ENCODE measurements at regions of chr3 and their contacts with region 1.

Region 1: DNA sequence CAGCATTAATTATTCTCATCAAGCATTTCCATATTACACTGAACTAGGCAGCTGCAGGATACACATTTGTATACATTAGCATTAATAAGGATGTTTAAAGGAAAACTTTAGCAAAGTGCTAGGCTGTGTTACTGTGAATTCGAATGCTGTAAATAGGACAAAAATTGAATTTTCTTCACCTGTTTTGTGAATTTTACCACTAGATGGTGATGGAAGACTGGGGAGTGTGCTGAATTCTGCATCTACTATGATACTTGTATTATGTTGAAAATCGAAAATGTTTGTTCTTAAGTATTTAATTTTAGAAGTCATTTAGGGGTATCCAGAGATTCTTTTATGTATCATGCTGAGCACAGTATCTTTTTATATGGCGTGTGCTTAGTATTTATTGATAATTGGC is 12.3 kb upstream of the P2RY14 start:
- DNase-seq: peak; percentile 54
- H3K4me3 Mint-ChIP-seq: no peak overlapping the region
- H3K27ac Mint-ChIP-seq: no peak overlapping the region
- H3K4me1 Mint-ChIP-seq: no peaks in the 10 kb centered on the region
- H3K27me3 Mint-ChIP-seq: peaks cover 14% of the 10 kb centered on the region

Region 2: GRCh38 chr3:151316267-151316991 is 25.8 kb after region 1 on chr3 and contains the start of gene GPR87:
- intact Hi-C with region 1: no loop called
- DNase-seq: peak; percentile 61
- H3K4me3 Mint-ChIP-seq: peak within 1 kb of the TSS; percentile 30
- H3K27ac Mint-ChIP-seq: peak within 1 kb of the TSS; percentile 60
- H3K4me1 Mint-ChIP-seq: peaks cover 18% of the 10 kb centered on the region
- H3K27me3 Mint-ChIP-seq: peaks cover 6% of the 10 kb centered on the region
- total RNA-seq, gene GPR87: 1.0 and 1.4 TPM in 2 replicates

Region 3: GRCh38 chr3:151327571-151328198 is 37.0 kb after region 1 on chr3:
- intact Hi-C with region 1: loop called (anchors 1 kb)
- DNase-seq: no peak
- H3K4me3 Mint-ChIP-seq: no peak overlapping the region
- H3K27ac Mint-ChIP-seq: no peak overlapping the region
- H3K4me1 Mint-ChIP-seq: peaks cover 9% of the 10 kb centered on the region
- H3K27me3 Mint-ChIP-seq: peaks cover 30% of the 10 kb centered on the region

Region 4: GRCh38 chr3:151412989-151413388 is 122.3 kb after region 1 on chr3:
- intact Hi-C with region 1: loop called (anchors 10 kb)
- DNase-seq: no peak
- H3K4me3 Mint-ChIP-seq: no peak overlapping the region
- H3K27ac Mint-ChIP-seq: no peak overlapping the region
- H3K4me1 Mint-ChIP-seq: no peaks in the 10 kb centered on the region
- H3K27me3 Mint-ChIP-seq: peaks cover 4% of the 10 kb centered on the region

Region 5: GRCh38 chr3:151686257-151686656 is 395.6 kb after region 1 on chr3:
- intact Hi-C with region 1: no loop called
- DNase-seq: no peak
- H3K4me3 Mint-ChIP-seq: no peak overlapping the region
- H3K27ac Mint-ChIP-seq: no peak overlapping the region
- H3K4me1 Mint-ChIP-seq: no peaks in the 10 kb centered on the region
- H3K27me3 Mint-ChIP-seq: peaks cover 3% of the 10 kb centered on the region

Region 6: GRCh38 chr3:151838583-151839312 is 548.1 kb after region 1 on chr3:
- intact Hi-C with region 1: loop called (anchors 1 kb)
- DNase-seq: peak; percentile 81
- H3K4me3 Mint-ChIP-seq: no peak overlapping the region
- H3K27ac Mint-ChIP-seq: no peak overlapping the region
- H3K4me1 Mint-ChIP-seq: no peaks in the 10 kb centered on the region
- H3K27me3 Mint-ChIP-seq: peaks cover 26% of the 10 kb centered on the region

Region 7: DNA sequence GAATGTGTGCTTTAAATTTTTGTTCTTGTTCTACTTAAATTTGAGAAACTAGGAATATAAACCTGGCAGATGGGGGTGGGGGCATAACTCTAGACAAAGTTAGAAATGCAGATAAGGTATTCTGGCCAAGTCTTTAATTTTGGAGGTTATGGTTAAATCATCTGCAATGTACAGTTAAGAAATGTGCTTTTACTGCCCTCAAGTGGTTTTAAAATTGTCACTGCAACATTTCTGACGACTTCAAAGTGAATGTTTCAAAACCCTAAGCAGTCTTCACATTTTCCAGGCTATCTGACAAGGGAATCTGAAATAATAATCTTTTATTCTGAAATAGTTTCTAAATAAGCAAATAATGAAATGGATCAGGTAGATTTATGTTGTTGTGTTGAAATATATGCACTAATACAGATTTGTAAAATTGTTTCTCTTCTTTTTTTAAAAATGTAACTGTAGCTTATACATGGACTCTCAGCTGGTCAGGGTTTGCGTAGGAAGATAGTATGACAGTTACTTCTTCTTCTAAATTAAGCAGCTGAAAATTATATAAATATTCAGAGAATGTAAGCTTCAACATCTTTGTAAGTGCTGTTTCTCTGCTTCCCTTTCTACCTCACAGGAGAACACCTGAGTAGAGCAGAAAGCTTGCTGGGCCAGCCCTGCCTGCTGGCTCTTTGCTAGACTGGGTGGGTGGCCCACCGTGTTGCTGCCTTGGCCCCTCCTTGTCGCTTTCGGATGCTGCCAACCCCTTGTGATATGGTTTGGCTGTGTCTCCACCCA is 627.8 kb after region 1 on chr3:
- intact Hi-C with region 1: loop called (anchors 2 kb)
- DNase-seq: no peak
- H3K4me3 Mint-ChIP-seq: no peak overlapping the region
- H3K27ac Mint-ChIP-seq: no peak overlapping the region
- H3K4me1 Mint-ChIP-seq: no peaks in the 10 kb centered on the region
- H3K27me3 Mint-ChIP-seq: peaks cover 6% of the 10 kb centered on the region

Measured in activated CD4-positive, alpha-beta T cell treated with anti-CD3 and anti-CD28 coated beads, Interleukin-2, amount 10 ng/mL, durations not matched to agents 24 days and 14 days (primary cell).